Adrenal gland (tissue), 19 donors: ENCODE measurements at regions of chr18 and their contacts with region 1.

Region 1: GRCh38 chr18:3585656-3586509 is 135.9 kb downstream of the TGIF1 start:
- DNase-seq: peak; percentile 85 to 96 (median 94)
- H3K4me3 ChIP-seq: peak overlapping the region in 1 of 4 donors; percentile 23
- H3K27ac ChIP-seq: no peak overlapping the region
- H3K4me1 ChIP-seq: peaks cover 3 to 17% of the 10 kb centered on the region in 2 donors
- H3K27me3 ChIP-seq: no peaks in the 10 kb centered on the region
- CTCF ChIP-seq: peak; percentile 59 to 94 (median 90)
- POLR2A ChIP-seq: no peak

Region 2: GRCh38 chr18:3297025-3297984 is 288.6 kb before region 1 on chr18:
- intact Hi-C with region 1: loop called in 1 of 2 experiments (anchors 10 kb)
- DNase-seq: peak; percentile 91 to 98 (median 96)
- H3K4me3 ChIP-seq: peak overlapping the region in 2 of 4 donors; percentile 53
- H3K27ac ChIP-seq: peak overlapping the region in 1 of 5 donors; percentile 52
- H3K4me1 ChIP-seq: peaks cover 0 to 7% of the 10 kb centered on the region in 2 donors
- H3K27me3 ChIP-seq: no peaks in the 10 kb centered on the region
- CTCF ChIP-seq: peak in 5 of 6 experiments; percentile 17 to 45 (median 30)
- POLR2A ChIP-seq: peak in 1 of 2 donors; percentile 66

Region 3: GRCh38 chr18:3384664-3385189 is 201.2 kb before region 1 on chr18:
- intact Hi-C with region 1: no loop called
- DNase-seq: no peak
- H3K4me3 ChIP-seq: no peak overlapping the region
- H3K27ac ChIP-seq: no peak overlapping the region
- H3K4me1 ChIP-seq: no peaks in the 10 kb centered on the region
- H3K27me3 ChIP-seq: no peaks in the 10 kb centered on the region
- CTCF ChIP-seq: no peak
- POLR2A ChIP-seq: no peak

Region 4: GRCh38 chr18:3538456-3538855 is 47.4 kb before region 1 on chr18:
- intact Hi-C with region 1: no loop called
- DNase-seq: no peak
- H3K4me3 ChIP-seq: no peak overlapping the region
- H3K27ac ChIP-seq: no peak overlapping the region
- H3K4me1 ChIP-seq: peaks cover 0 to 10% of the 10 kb centered on the region in 2 donors
- H3K27me3 ChIP-seq: no peaks in the 10 kb centered on the region
- CTCF ChIP-seq: no peak
- POLR2A ChIP-seq: no peak

Region 5: DNA sequence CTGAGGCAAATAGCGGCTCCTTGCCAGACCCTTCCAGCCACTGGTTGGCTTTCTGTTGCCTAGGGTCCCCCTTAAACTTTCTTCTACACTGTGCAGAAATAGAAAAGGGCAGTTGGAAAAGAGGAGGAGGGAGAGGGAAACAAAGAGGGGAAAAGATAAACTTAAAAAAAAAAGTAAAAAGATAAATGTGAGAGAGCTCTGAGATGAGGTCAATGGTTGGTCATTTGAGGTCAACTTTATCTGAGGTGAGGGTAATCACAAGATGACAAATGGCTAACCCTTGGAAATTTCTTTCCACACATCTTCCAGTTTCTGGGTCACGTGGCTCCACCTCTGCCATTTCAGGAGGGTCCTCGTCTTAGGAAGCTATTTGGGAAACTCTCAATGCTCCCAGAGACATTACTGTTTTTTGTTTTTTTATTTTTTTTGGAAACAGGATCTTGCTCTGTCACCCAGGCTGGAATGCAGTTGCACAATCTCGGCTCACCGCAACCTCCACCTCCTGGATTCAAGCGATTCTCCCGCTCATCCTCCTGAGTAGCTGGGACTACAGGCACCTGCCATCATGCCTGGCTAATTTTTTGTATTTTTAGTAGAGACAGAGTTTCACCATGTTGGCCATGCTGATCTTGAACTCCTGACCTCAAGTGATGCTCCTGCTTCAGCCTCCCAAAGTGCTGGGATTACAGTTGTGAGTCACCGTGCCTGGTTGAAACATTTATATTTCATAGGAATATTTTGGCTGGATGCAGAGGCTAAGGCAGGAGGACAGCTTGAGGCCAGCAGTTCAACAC is 63.9 kb after region 1 on chr18:
- intact Hi-C with region 1: no loop called
- DNase-seq: peak; percentile 38 to 89 (median 85)
- H3K4me3 ChIP-seq: peak overlapping the region in 2 of 4 donors; percentile 6 to 34
- H3K27ac ChIP-seq: peak overlapping the region; percentile 74 to 96 (median 86)
- H3K4me1 ChIP-seq: peaks cover 28 to 53% of the 10 kb centered on the region in 2 donors
- H3K27me3 ChIP-seq: no peaks in the 10 kb centered on the region
- CTCF ChIP-seq: no peak
- POLR2A ChIP-seq: peak in 1 of 2 donors; percentile 9